Activated CD8-positive, alpha-beta T cell treated with anti-CD3 and anti-CD28 coated beads, Interleukin-2, amount 10 ng/mL, durations not matched to agents 7 days and 5 days (primary cell): ENCODE measurements at regions of chr18 and their contacts with region 1.

Region 1: DNA sequence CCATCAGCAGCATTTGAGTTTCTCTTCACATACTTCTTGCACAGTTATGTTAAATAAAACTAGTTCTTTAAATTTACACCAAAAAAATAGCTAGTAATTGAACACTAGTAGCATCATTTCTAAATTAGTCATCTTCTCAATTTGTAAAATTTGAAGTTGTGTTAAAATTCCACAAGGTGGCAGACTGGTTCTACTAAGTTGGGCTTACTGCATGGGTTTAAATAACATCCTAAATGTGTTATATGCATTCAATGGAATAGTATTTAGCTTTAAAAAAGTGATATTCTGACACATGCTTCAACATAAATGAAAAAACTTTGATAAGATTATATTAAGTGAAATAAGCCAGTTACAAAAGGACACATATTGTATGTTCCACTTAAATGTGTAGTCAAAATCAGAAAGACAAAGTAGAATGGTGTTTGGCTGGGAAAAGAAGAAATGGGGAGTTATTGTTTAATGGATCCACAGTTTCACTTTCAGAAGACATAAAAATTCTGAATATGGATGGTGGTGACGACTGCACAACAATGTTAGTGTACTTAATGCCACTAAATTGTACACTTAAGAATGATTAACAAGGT is 28.7 kb upstream of the RPRD1A start:
- DNase-seq: peak; percentile 28
- ATAC-seq: no peak
- H3K4me3 Mint-ChIP-seq: no peak overlapping the region
- H3K27ac Mint-ChIP-seq: no peak overlapping the region
- H3K4me1 Mint-ChIP-seq: peaks cover 10% of the 10 kb centered on the region
- H3K27me3 Mint-ChIP-seq: peaks cover 21% of the 10 kb centered on the region

Region 2: GRCh38 chr18:36114301-36114700 is 18.3 kb after region 1 on chr18:
- CTCF ChIA-PET with region 1: no interaction called
- POLR2A ChIA-PET with region 1: no interaction called
- DNase-seq: no peak
- ATAC-seq: no peak
- H3K4me3 Mint-ChIP-seq: no peak overlapping the region
- H3K27ac Mint-ChIP-seq: no peak overlapping the region
- H3K4me1 Mint-ChIP-seq: no peaks in the 10 kb centered on the region
- H3K27me3 Mint-ChIP-seq: no peaks in the 10 kb centered on the region

Region 3: GRCh38 chr18:36284671-36285295 is 188.8 kb after region 1 on chr18:
- CTCF ChIA-PET with region 1: interaction called, 50 read pairs
- POLR2A ChIA-PET with region 1: no interaction called
- DNase-seq: peak; percentile 59
- ATAC-seq: no peak
- H3K4me3 Mint-ChIP-seq: no peak overlapping the region
- H3K27ac Mint-ChIP-seq: no peak overlapping the region
- H3K4me1 Mint-ChIP-seq: peaks cover 1% of the 10 kb centered on the region
- H3K27me3 Mint-ChIP-seq: peaks cover 15% of the 10 kb centered on the region